ENCODE measurements at regions of chr1 and their contacts with region 1.

Region 1: DNA sequence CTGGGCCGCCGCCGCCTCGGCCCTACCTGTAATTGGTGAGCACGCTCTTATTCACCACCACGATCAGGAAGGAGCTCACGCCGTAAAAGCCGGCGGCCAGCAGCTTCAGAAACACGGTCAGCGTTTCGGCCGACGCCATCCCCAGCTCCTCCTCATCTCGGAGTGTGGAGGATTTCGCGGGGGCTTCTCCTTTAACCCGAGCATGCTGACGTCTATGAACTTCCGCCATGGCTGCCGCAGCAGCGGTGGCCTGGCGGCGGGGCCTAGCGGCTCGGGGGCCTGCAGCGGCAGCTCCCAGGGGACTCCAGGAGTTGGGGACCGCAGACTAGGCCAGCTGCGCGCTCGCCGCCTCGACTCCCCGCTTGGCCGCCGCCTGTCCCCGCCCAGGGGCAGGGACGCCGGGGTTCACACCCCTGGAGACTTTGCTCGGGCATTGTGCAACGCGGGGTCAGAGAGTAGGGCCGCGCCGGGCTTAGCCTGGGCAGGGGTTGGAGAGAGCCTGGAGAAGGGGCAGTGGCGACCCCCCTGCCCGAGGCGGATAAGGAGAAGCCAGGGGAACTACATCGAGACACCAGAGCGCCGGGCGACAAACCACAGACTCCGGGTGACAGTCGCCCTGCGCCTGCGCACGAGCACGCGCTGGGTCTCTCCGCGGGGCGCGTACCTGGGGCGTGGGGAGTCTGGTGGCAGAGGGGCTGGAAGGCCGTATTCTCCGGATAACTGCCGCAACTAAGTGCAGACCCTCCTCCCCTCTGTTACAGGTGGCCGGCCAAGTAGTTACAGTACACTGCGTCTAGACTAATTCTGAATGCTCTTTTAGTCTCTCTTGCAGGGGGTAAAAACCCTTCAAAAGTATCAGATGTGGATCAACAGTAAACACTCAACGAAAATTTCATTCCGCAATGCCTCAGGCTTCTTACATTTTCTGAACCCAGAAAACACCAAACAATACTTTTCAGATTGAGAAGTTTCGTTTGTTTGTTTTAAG is at the start of gene SLC35D1:
- DNase-seq: peak; percentile 93
- ATAC-seq: peak; percentile 88
- H3K4me3 ChIP-seq: peak within 1 kb of the TSS; percentile 68 to 78 (median 77)
- H3K4me3 Mint-ChIP-seq: peak within 1 kb of the TSS; percentile 90
- H3K27ac ChIP-seq: peak within 1 kb of the TSS; percentile 84 to 88
- H3K27ac Mint-ChIP-seq: peak within 1 kb of the TSS; percentile 95
- H3K4me1 ChIP-seq: peaks cover 11 to 15% of the 10 kb centered on the region in 2 donors
- H3K4me1 Mint-ChIP-seq: peaks cover 26% of the 10 kb centered on the region
- H3K27me3 ChIP-seq: no peaks in the 10 kb centered on the region
- H3K27me3 Mint-ChIP-seq: no peaks in the 10 kb centered on the region
- CTCF ChIP-seq: no peak
- total RNA-seq, gene SLC35D1: 16.8 and 17.1 TPM in 2 replicates

Region 2: DNA sequence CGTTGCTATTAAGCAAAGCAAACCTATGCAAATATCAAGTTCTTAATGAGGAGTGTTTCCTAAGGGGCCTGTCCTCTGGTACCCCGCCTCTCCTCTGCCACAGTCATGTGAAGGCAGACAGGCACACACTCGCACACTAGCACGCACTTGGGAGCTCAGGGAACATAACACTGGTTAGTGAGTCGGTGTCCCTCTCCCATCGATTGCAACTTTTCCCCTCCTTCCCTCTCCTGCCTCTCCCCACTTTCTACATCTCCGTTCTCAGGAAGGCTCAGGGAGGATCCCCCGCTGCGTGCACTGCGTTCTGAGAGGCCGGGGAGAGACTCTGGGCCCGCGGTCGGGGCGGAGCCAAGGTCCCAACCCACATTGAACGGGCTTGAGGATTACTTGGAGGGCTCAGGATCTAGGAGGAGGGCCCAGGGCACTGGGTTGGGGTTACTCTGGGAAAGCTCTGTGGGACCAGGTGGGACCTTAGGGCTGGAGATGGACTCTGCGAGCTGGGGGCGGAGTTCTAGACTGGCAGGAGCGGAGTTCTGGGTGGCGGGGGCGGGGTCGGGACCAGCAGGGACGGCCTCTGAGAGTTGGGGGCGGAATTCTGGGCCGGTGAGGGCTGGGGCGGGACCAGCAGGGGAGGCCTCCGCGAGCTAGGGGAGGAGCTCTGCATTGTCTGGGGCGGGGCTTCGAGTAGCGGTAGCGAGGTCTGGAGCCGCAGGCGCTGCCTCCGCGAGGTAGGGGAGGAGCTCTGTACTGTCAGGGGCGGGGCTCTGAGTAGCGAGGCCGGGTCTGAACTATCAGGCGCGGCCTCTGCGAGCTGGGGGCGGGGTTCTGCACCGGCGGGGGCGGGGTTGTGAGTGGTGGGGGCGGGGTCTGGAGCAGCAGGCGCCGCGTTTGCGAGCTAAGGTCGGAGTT is 1634.1 kb before region 1 on chr1:
- CTCF ChIA-PET with region 1: no interaction called
- POLR2A ChIA-PET with region 1: no interaction called
- intact Hi-C with region 1: loop called (anchors 2 kb)
- DNase-seq: peak; percentile 99
- ATAC-seq: peak; percentile 91
- H3K4me3 ChIP-seq: peak overlapping the region; percentile 66 to 97 (median 92)
- H3K4me3 Mint-ChIP-seq: no peak overlapping the region
- H3K27ac ChIP-seq: peak overlapping the region; percentile 66 to 75
- H3K27ac Mint-ChIP-seq: no peak overlapping the region
- H3K4me1 ChIP-seq: peaks cover 14 to 23% of the 10 kb centered on the region in 2 donors
- H3K4me1 Mint-ChIP-seq: peaks cover 16% of the 10 kb centered on the region
- H3K27me3 ChIP-seq: peaks cover 0 to 8% (median 5%) of the 10 kb centered on the region in 4 experiments
- H3K27me3 Mint-ChIP-seq: peaks cover 15% of the 10 kb centered on the region
- CTCF ChIP-seq: no peak

Region 3: GRCh38 chr1:66929999-66930822 is 123.9 kb before region 1 on chr1:
- CTCF ChIA-PET with region 1: interaction called, 3 read pairs
- POLR2A ChIA-PET with region 1: interaction called, 5 read pairs
- intact Hi-C with region 1: loop called (anchors 1 kb)
- DNase-seq: peak; percentile 96
- ATAC-seq: peak; percentile 77
- H3K4me3 ChIP-seq: peak overlapping the region; percentile 79 to 92 (median 86)
- H3K4me3 Mint-ChIP-seq: peak overlapping the region; percentile 94
- H3K27ac ChIP-seq: peak overlapping the region; percentile 82 to 95
- H3K27ac Mint-ChIP-seq: peak overlapping the region; percentile 93
- H3K4me1 ChIP-seq: peaks cover 29 to 46% of the 10 kb centered on the region in 2 donors
- H3K4me1 Mint-ChIP-seq: peaks cover 53% of the 10 kb centered on the region
- H3K27me3 ChIP-seq: no peaks in the 10 kb centered on the region
- H3K27me3 Mint-ChIP-seq: no peaks in the 10 kb centered on the region
- CTCF ChIP-seq: peak; percentile 37

Region 4: DNA sequence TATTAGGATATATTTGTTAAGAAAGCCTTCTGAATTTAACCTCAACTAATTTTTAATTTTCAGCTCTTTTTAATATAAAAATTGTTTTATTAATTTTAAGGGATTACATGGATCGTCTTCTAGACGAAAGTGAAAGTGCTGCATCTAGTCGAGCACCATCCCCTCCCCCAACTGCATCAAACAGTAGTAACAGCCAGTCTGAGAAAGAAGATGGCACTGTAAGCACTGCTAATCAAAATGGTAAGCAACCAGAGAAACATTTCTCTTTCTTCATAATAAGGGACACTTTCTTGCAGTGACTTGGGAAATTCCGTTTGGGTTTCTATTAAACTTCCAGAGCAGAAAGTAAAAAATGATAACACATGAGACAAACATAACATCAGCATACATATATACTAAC is 72.4 kb before region 1 on chr1:
- CTCF ChIA-PET with region 1: no interaction called
- POLR2A ChIA-PET with region 1: no interaction called
- intact Hi-C with region 1: loop called (anchors 5 kb)
- DNase-seq: peak; percentile 29
- ATAC-seq: no peak
- H3K4me3 ChIP-seq: peak overlapping the region in 1 of 5 experiments; percentile 5
- H3K4me3 Mint-ChIP-seq: peak overlapping the region; percentile 41
- H3K27ac ChIP-seq: peak overlapping the region in 1 of 2 donors; percentile 74
- H3K27ac Mint-ChIP-seq: no peak overlapping the region
- H3K4me1 ChIP-seq: peaks cover 0 to 6% of the 10 kb centered on the region in 2 donors
- H3K4me1 Mint-ChIP-seq: peaks cover 14% of the 10 kb centered on the region
- H3K27me3 ChIP-seq: no peaks in the 10 kb centered on the region
- H3K27me3 Mint-ChIP-seq: no peaks in the 10 kb centered on the region
- CTCF ChIP-seq: no peak

Region 5: DNA sequence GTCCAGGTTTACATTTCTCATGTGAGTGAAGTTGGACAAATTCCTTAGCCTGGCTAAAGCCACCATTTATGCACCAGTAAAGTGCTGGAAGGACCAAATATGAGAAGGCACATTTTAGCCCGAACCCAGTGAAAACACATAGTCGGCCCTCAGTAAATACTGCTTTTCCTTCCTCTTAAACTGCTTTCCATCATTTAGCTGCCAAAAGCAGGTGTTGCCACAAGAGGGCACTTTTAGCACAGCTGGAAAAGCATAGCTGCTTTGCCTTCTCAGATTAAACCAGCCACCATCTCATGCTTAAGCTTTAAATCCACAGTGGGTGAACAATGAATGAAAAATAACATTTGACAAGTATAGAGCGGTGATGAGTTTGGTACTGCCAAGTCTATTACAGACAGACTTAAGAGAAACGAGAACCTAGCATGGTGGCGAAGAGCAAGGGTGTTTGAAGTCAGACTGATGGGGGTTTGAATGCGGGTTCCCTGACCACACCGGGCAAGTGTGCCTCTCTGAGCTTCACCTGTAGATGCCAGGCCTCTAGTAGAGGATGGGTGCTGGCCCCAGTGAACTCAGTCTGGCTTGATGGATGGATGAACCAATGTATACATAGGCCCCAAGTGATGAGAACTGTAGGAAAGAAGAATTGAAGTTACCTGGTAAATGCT is 57.9 kb before region 1 on chr1:
- CTCF ChIA-PET with region 1: interaction called, 22 read pairs
- POLR2A ChIA-PET with region 1: no interaction called
- intact Hi-C with region 1: loop called (anchors 2 kb)
- DNase-seq: peak; percentile 79
- ATAC-seq: peak; percentile 78
- H3K4me3 ChIP-seq: no peak overlapping the region
- H3K4me3 Mint-ChIP-seq: no peak overlapping the region
- H3K27ac ChIP-seq: no peak overlapping the region
- H3K27ac Mint-ChIP-seq: no peak overlapping the region
- H3K4me1 ChIP-seq: peaks cover 3 to 4% of the 10 kb centered on the region in 2 donors
- H3K4me1 Mint-ChIP-seq: peaks cover 8% of the 10 kb centered on the region
- H3K27me3 ChIP-seq: no peaks in the 10 kb centered on the region
- H3K27me3 Mint-ChIP-seq: no peaks in the 10 kb centered on the region
- CTCF ChIP-seq: peak; percentile 77

Region 6: DNA sequence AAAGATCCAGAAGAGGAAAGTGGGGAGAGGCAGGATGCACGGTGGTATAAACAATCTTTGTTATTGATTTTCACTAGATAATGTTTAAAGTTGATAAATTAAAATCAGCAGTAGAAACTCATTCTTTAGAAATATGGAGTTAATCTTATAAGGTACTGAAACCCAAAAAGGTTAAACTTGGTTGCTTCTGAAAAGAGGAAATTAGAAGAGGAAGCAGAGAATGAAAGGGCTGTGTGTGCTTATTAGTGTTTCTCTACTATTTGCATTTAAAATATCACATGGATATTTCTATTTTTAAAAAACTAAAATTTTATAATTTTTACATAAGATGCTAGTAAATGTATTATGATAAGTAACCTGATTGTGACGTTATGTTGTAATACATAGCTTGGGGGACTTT is 56.3 kb after region 1 on chr1:
- CTCF ChIA-PET with region 1: interaction called, 3 read pairs
- POLR2A ChIA-PET with region 1: no interaction called
- intact Hi-C with region 1: loop called (anchors 1 kb)
- DNase-seq: peak; percentile 61
- ATAC-seq: peak; percentile 34
- H3K4me3 ChIP-seq: peak overlapping the region in 1 of 5 experiments; percentile 26
- H3K4me3 Mint-ChIP-seq: peak overlapping the region; percentile 14
- H3K27ac ChIP-seq: no peak overlapping the region
- H3K27ac Mint-ChIP-seq: no peak overlapping the region
- H3K4me1 ChIP-seq: peaks cover 27 to 38% of the 10 kb centered on the region in 2 donors
- H3K4me1 Mint-ChIP-seq: peaks cover 40% of the 10 kb centered on the region
- H3K27me3 ChIP-seq: no peaks in the 10 kb centered on the region
- H3K27me3 Mint-ChIP-seq: no peaks in the 10 kb centered on the region
- CTCF ChIP-seq: no peak

Region 7: GRCh38 chr1:67685067-67685557 is 631.0 kb after region 1 on chr1 and contains the start of gene GADD45A:
- CTCF ChIA-PET with region 1: no interaction called
- POLR2A ChIA-PET with region 1: interaction called, 3 read pairs
- intact Hi-C with region 1: loop called (anchors 2 kb)
- DNase-seq: peak; percentile 95
- ATAC-seq: peak; percentile 88
- H3K4me3 ChIP-seq: peak within 1 kb of the TSS; percentile 66 to 91 (median 80)
- H3K4me3 Mint-ChIP-seq: peak within 1 kb of the TSS; percentile 91
- H3K27ac ChIP-seq: peak within 1 kb of the TSS; percentile 15 to 42
- H3K27ac Mint-ChIP-seq: peak within 1 kb of the TSS; percentile 81
- H3K4me1 ChIP-seq: peaks cover 16 to 17% of the 10 kb centered on the region in 2 donors
- H3K4me1 Mint-ChIP-seq: peaks cover 31% of the 10 kb centered on the region
- H3K27me3 ChIP-seq: no peaks in the 10 kb centered on the region
- H3K27me3 Mint-ChIP-seq: no peaks in the 10 kb centered on the region
- CTCF ChIP-seq: no peak
- total RNA-seq, gene GADD45A: 21.1 and 22.7 TPM in 2 replicates